ENCODE measurements at regions of chr13 and their contacts with region 1.

Region 1: GRCh38 chr13:21399741-21400140 is 59.4 kb downstream of the ZDHHC20 start:
- DNase-seq: no peak
- H3K4me3 Mint-ChIP-seq: peak overlapping the region; percentile 52
- H3K27ac Mint-ChIP-seq: peak overlapping the region; percentile 70
- H3K4me1 Mint-ChIP-seq: peaks cover 41% of the 10 kb centered on the region
- H3K27me3 Mint-ChIP-seq: no peaks in the 10 kb centered on the region

Region 2: DNA sequence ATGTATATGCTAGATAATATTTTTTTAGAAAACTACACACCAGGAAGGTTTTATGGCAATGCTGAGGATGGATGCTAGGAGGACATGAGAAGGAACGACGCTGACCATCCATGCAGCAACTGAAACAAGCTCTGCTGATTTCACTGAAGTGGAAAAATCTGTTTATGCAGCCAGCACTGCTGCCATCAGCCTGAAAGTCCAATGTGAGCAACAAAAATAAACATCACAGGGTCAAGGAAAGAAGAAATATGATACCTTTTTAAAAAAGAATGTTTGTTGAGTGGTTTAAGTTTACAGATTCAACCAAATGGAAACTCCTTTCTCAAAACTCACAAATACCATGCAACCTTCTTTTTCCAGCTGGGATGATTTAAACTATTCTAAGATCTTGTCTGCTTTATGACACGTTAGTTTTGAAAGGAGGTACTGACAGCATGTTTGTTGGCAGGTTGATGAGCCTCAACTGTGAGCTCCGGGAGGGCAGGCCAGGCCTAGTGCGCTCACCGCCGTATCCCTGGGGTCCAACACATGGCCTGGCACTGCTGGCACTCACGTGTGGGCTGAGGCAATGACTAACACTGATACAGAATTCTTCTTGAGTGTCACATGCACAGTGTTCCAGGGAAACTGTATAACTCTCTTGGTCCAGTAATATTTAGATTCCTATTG is 385.1 kb before region 1 on chr13:
- intact Hi-C with region 1: no loop called
- DNase-seq: no peak
- H3K4me3 Mint-ChIP-seq: no peak overlapping the region
- H3K27ac Mint-ChIP-seq: no peak overlapping the region
- H3K4me1 Mint-ChIP-seq: peaks cover 32% of the 10 kb centered on the region
- H3K27me3 Mint-ChIP-seq: no peaks in the 10 kb centered on the region

Region 3: DNA sequence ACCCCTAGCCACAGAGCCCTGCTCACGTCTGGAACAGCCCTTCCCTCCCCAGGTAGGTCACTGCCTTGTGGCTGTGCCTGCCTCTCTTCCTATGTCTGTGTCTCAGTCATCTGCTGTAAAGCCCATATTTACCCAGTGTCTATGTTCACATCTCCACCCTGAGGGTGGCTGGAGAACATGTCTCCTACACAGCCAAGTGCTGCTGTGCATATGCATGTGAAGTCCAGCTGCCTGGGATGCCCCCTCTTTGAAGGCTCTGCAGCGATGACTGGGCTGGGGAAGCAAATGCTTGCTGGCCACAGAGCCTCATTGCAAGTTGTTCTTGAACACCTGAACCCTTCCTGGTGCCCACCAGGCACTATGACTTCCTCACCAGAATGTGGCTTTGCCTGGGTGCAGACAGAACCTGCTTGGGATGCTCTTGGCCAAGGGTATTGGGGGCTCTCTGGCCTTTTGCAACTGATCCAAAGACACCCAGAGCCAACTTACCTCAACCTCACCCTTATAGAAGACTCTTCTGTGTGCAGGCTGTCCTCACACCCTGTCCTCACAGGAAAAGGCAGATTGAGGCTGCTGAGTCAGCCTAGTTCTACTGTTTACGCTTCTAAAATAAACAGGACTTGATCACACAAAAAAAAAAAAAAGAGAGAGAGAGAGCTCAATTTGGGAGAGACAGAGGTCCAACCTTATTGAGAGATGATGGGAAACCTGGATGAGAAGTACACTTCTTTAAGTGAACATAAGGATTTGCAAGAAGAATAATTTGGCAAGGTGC is 196.8 kb before region 1 on chr13:
- intact Hi-C with region 1: no loop called
- DNase-seq: no peak
- H3K4me3 Mint-ChIP-seq: no peak overlapping the region
- H3K27ac Mint-ChIP-seq: no peak overlapping the region
- H3K4me1 Mint-ChIP-seq: no peaks in the 10 kb centered on the region
- H3K27me3 Mint-ChIP-seq: peaks cover 2% of the 10 kb centered on the region

Region 4: DNA sequence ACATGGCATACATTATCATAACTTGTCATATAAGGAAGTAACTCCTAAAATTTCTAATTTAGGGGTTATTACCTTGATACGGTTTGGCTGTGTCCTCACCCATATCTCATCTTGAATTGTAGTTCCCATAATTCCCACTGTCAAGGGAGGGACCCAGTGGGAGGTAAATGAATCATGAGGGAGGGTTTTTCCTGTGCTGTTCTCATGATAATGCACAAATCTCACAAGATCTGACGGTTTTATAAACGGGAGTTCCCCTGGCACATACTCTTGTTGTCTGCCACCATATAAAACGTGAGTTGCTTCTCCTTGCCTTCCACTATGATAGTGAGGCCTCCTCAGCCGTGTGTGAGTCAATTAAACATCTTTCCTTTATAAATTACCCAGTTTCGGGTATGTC is 16.7 kb before region 1 on chr13:
- intact Hi-C with region 1: loop called (anchors 1 kb)
- DNase-seq: no peak
- H3K4me3 Mint-ChIP-seq: no peak overlapping the region
- H3K27ac Mint-ChIP-seq: no peak overlapping the region
- H3K4me1 Mint-ChIP-seq: no peaks in the 10 kb centered on the region
- H3K27me3 Mint-ChIP-seq: no peaks in the 10 kb centered on the region

Region 5: GRCh38 chr13:21435710-21436151 is 36.0 kb after region 1 on chr13:
- intact Hi-C with region 1: loop called (anchors 5 kb)
- DNase-seq: peak; percentile 85
- H3K4me3 Mint-ChIP-seq: peak overlapping the region; percentile 52
- H3K27ac Mint-ChIP-seq: peak overlapping the region; percentile 83
- H3K4me1 Mint-ChIP-seq: peaks cover 31% of the 10 kb centered on the region
- H3K27me3 Mint-ChIP-seq: no peaks in the 10 kb centered on the region

Region 6: DNA sequence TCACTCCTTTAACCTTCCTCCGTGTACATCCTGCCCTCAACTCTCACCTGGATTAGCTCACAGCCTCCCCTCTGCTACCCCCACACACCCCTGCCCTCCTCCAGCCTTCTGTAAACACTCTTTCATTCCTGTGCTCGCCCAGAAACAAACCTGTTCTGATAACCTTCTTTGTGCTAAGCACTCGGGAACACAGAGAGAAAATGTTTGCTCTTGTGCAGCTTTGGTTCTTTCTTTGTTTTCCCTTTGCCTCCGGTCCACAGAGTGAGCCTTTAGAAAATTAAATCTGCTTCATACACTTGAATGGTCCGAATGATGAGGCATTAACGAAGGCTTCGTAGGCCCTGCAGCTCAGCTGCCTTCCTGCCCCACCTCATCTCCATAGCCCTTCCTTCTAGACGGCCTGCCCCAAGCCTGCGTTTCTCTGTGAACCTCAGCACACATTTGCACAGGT is 66.0 kb after region 1 on chr13:
- intact Hi-C with region 1: no loop called
- DNase-seq: no peak
- H3K4me3 Mint-ChIP-seq: no peak overlapping the region
- H3K27ac Mint-ChIP-seq: no peak overlapping the region
- H3K4me1 Mint-ChIP-seq: no peaks in the 10 kb centered on the region
- H3K27me3 Mint-ChIP-seq: peaks cover 21% of the 10 kb centered on the region